Sciatic nerve (tissue), 2 donors: ENCODE measurements at regions of chr14 and their contacts with region 1.

Region 1: DNA sequence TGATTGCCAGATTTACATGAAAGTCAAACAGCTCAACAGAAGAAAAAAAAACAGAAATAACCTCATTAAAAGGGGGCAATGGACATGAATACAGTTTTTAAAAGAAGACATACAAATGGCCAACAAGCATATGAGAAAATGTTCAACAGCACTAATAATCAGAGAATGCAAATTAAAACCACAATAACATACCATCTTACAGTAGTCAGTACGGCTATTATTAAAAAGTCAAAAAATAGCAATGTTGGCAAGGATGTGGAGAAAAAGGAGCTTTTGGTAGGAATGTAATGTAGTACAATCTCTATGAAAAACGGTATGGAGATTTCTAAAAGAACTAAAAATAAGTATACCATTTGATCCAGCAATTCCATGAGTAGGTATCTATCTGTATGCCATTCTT is 272.1 kb downstream of the CEP128 start:
- DNase-seq: no peak
- ATAC-seq: no peak

Region 2: GRCh38 chr14:80491131-80491530 is 178.3 kb before region 1 on chr14:
- intact Hi-C with region 1: loop called (anchors 5 kb)
- DNase-seq: peak; percentile 64
- ATAC-seq: peak; percentile 96